ENCODE measurements at regions of chr20 and their contacts with region 1.

Region 1: DNA sequence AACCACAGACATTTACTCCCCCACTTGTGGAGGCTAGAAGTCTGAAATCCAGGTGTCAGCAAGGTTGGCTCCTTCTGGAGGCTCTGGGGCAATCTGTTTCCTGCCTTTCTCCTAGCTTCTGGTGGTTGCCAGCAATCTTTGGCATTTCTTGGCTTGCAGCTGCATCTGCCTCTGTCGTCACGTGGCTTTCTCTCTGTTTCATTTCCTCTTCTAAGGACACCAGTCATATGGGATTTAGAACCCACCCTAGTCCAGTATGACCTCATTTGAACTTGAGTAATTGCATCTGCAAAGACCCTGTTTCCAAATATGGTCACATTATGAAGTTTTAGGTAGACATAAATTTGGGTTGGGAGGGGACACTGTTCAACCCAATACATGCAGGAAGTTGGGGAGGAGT is 56.2 kb upstream of the EPB41L1 start:
- DNase-seq: peak in 1 of 2 donors; percentile 28
- ATAC-seq: peak in 6 of 8 donors; percentile 20 to 47 (median 43)
- H3K4me3 ChIP-seq: no peak overlapping the region
- H3K27ac ChIP-seq: peak overlapping the region in 4 of 10 donors; percentile 6 to 73 (median 44)
- H3K4me1 ChIP-seq: peaks cover 3 to 48% (median 30%) of the 10 kb centered on the region in 9 donors
- H3K27me3 ChIP-seq: peaks cover 0 to 16% (median 0%) of the 10 kb centered on the region in 7 donors
- CTCF ChIP-seq: no peak

Region 2: GRCh38 chr20:36030149-36030548 is 68.2 kb before region 1 on chr20:
- intact Hi-C with region 1: loop called in 1 of 10 experiments (anchors 2 kb)
- DNase-seq: peak; percentile 31 to 57
- ATAC-seq: peak in 7 of 8 donors; percentile 34 to 76 (median 62)
- H3K4me3 ChIP-seq: no peak overlapping the region
- H3K27ac ChIP-seq: no peak overlapping the region
- H3K4me1 ChIP-seq: peaks cover 0 to 13% (median 0%) of the 10 kb centered on the region in 9 donors
- H3K27me3 ChIP-seq: no peaks in the 10 kb centered on the region
- CTCF ChIP-seq: no peak

Region 3: GRCh38 chr20:36132802-36133211 is 34.4 kb after region 1 on chr20:
- intact Hi-C with region 1: loop called in 1 of 10 experiments (anchors 5 kb)
- DNase-seq: no peak
- ATAC-seq: no peak
- H3K4me3 ChIP-seq: no peak overlapping the region
- H3K27ac ChIP-seq: no peak overlapping the region
- H3K4me1 ChIP-seq: peaks cover 0 to 3% (median 0%) of the 10 kb centered on the region in 9 donors
- H3K27me3 ChIP-seq: no peaks in the 10 kb centered on the region
- CTCF ChIP-seq: no peak